BJ (cell line): ENCODE measurements at regions of chr15 and their contacts with region 1.

Region 1: DNA sequence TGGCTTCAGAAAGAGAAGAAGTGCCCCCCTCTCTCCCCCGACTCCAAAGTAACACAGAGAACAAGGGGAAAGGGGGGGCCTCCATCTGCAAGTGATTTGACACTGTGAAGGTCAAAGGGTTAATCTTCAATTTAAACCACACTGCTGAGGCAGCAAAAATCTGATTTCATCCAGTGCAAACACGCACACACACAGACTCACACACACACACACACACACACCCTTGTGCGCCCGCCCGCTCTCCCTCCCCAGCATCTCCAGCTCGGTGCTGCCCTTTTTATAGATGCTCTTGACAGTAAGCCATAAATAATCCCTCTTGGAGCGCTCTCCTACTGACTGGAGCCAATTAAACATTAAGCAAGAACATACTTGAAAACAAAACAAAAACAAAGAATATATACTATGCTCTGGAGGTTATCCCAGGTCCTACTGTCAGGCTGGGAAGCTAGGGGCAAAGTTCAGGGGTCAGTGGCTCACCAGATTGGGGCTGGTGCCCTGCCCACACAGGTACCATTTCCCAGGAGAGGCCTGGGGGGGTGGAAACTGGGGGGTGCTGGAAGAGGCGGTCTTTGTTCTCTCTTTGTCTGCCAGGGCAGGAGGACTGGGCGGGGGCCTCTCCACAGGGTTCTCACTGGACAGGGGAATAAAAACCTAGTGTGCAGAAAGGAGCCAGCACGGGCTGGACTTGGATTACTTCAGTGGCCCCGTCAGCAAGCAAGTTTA is 16.3 kb downstream of the BMF start:
- DNase-seq: peak; percentile 91
- H3K4me3 ChIP-seq: no peak overlapping the region
- H3K27me3 ChIP-seq: no peaks in the 10 kb centered on the region
- CTCF ChIP-seq: no peak

Region 2: DNA sequence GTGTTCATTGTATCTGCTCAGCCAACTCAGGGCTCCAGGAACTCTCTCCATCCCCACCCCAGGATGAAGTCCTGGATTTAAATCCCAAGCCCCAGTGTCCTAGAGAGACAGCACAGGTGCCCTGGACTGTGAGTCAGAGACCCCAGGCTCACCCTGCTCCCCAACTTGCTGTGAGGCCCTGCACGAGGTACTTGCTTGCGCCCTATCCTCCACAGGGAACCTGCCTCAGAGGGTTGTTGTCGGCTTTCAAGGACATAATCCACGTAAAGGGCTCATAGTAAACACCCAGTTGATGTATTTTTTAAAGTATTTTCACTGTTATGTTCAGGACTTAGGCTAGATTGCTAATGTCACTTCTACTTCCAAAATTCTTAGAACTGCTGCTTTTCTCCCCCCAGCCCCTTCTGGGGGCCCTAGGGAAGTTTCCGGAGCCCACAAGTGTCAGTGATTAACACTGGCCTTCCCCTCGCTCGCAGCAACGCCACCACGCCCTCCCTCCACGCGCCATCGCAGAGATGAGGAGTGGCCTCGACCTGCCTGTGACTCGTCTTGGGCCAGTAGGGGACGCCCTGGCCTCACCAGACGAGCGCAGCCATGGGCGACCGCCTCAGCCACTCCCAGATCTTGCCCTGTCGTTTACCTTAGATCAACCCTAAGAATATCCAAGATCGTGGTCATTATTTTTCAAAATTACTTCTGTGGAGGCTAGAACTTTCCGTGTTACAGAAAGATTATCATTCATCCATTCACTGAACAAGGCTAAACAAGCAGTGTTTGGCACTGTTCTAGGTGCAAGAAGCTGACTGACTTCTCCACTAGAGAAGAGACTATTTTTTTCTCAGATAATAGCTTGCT is 47.5 kb before region 1 on chr15:
- CTCF ChIA-PET with region 1: interaction called, 10 read pairs
- POLR2A ChIA-PET with region 1: no interaction called
- DNase-seq: no peak
- H3K4me3 ChIP-seq: no peak overlapping the region
- H3K27me3 ChIP-seq: no peaks in the 10 kb centered on the region
- CTCF ChIP-seq: peak; percentile 97